GM18951 (cell line): ENCODE measurements at regions of chr11 and their contacts with region 1.

Region 1: GRCh38 chr11:9757809-9758636 is 94.1 kb downstream of the SWAP70 start:
- POLR2A ChIP-seq: peak; percentile 63

Region 2: GRCh38 chr11:9802291-9802861 is 44.4 kb after region 1 on chr11:
- in situ Hi-C with region 1: no loop called
- POLR2A ChIP-seq: no peak

Region 3: DNA sequence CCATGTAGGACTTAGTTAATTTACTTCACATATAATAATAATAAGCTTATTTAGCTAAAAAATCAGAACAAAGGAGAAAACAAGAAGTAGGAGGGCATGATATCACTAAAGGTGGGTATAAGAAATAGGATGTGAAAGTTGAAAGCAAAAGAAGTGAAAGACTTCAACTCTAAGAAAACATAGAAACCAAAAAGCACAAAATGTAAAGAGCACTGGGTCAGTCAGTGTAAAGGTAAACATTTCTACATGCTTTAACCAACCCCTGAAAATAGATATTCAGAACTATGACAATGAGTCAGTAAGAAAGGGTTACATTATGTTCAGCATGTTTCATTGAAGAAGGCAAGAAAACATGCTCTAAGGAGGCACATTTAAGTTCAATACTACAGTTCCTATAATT is 204.7 kb after region 1 on chr11:
- in situ Hi-C with region 1: loop called (anchors 10 kb)
- POLR2A ChIP-seq: no peak

Region 4: GRCh38 chr11:10307442-10308207 is 549.6 kb after region 1 on chr11:
- in situ Hi-C with region 1: loop called (anchors 25 kb)
- POLR2A ChIP-seq: no peak